Activated CD4-positive, alpha-beta T cell treated with anti-CD3 and anti-CD28 coated beads for 36 hours (primary cell): ENCODE measurements at regions of chr12 and their contacts with region 1.

Region 1: GRCh38 chr12:32257695-32258496 is 141.5 kb upstream of the FGD4 start:
- DNase-seq: no peak
- ATAC-seq: peak; percentile 81
- H3K4me3 Mint-ChIP-seq: no peak overlapping the region
- H3K27ac Mint-ChIP-seq: peak overlapping the region; percentile 66
- H3K4me1 Mint-ChIP-seq: peaks cover 15% of the 10 kb centered on the region
- H3K27me3 Mint-ChIP-seq: no peaks in the 10 kb centered on the region

Region 2: DNA sequence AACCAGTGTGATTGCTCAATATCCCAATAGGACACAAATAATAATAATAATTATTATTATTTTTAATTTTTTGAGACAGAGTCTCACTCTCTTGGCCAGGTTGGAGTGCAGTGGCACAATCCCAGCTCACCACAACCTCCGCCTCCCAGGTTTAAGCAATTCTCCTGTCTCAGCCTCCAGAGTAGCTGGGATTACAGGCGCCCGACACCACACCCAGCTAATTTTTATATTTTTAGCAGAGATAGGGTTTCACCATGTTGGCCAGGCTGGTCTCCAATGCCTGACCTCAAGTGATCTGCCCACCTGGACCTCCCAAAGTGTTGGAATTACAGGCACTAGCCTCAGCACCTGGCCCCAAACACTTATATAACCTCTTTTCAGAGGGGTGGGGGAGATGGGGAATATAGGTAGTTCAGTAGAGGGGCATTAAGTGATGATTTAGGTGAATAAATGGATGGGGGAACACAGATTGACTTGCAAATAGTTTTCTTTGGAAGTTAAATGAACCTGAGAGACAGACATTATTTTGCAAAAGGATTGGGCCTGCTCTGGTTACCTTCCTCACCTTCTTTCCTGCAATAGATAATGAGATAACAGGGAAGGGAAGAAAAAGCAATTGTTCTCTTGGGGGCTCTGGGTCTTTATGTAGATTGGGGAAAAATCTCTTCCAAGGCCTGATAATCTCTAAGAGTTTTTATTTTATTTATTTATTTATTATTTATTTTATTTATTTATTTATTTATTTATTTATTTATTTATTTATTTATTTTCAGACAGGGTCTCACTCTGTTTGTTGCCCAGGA is 241.0 kb before region 1 on chr12:
- CTCF ChIA-PET with region 1: no interaction called
- POLR2A ChIA-PET with region 1: no interaction called
- intact Hi-C with region 1: no loop called
- DNase-seq: no peak
- ATAC-seq: no peak
- H3K4me3 Mint-ChIP-seq: no peak overlapping the region
- H3K27ac Mint-ChIP-seq: no peak overlapping the region
- H3K4me1 Mint-ChIP-seq: peaks cover 19% of the 10 kb centered on the region
- H3K27me3 Mint-ChIP-seq: no peaks in the 10 kb centered on the region

Region 3: GRCh38 chr12:32197421-32197820 is 60.5 kb before region 1 on chr12:
- CTCF ChIA-PET with region 1: no interaction called
- POLR2A ChIA-PET with region 1: no interaction called
- intact Hi-C with region 1: loop called in 1 of 2 experiments (anchors 2 kb)
- DNase-seq: no peak
- ATAC-seq: no peak
- H3K4me3 Mint-ChIP-seq: no peak overlapping the region
- H3K27ac Mint-ChIP-seq: no peak overlapping the region
- H3K4me1 Mint-ChIP-seq: peaks cover 12% of the 10 kb centered on the region
- H3K27me3 Mint-ChIP-seq: no peaks in the 10 kb centered on the region

Region 4: DNA sequence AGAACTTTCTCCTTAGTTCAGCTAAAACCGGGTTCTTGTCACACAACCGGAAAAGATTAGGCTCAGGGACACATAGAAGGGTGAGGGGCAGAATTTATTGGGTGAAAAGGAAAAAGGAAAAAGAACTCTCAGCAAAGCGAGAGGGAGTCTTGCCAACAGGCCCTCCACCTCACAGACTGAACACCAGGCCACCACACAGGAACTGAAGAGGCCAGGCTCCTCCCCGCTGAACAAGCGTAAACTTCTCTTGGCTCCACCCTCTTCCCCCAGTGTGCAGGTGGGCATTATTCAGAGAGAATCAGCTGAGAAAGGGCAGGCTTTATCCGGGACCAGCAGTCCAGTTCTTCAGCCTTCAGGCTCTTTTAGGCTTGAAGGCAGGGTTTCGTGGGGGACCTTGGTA is 15.8 kb after region 1 on chr12:
- CTCF ChIA-PET with region 1: no interaction called
- POLR2A ChIA-PET with region 1: no interaction called
- intact Hi-C with region 1: loop called in 1 of 2 experiments (anchors 1 kb)
- DNase-seq: peak; percentile 62
- ATAC-seq: peak; percentile 91
- H3K4me3 Mint-ChIP-seq: peak overlapping the region; percentile 5
- H3K27ac Mint-ChIP-seq: peak overlapping the region; percentile 80
- H3K4me1 Mint-ChIP-seq: peaks cover 23% of the 10 kb centered on the region
- H3K27me3 Mint-ChIP-seq: no peaks in the 10 kb centered on the region